ENCODE measurements at regions of chr6 and their contacts with region 1.

Region 1: GRCh38 chr6:144215932-144216667 is 65.8 kb downstream of the STX11 start:
- DNase-seq: peak; percentile 93
- H3K4me3 ChIP-seq: peak overlapping the region; percentile 79
- H3K27ac ChIP-seq: peak overlapping the region; percentile 93
- H3K4me1 ChIP-seq: peaks cover 31% of the 10 kb centered on the region
- H3K27me3 ChIP-seq: no peaks in the 10 kb centered on the region
- CTCF ChIP-seq: peak; percentile 67

Region 2: GRCh38 chr6:144284783-144285547 is 68.9 kb after region 1 on chr6 and contains the start of gene UTRN:
- intact Hi-C with region 1: loop called (anchors 5 kb)
- DNase-seq: peak; percentile 85
- H3K4me3 ChIP-seq: peak within 1 kb of the TSS; percentile 96
- H3K27ac ChIP-seq: peak within 1 kb of the TSS; percentile 98
- H3K4me1 ChIP-seq: peaks cover 48% of the 10 kb centered on the region
- H3K27me3 ChIP-seq: no peaks in the 10 kb centered on the region
- CTCF ChIP-seq: peak; percentile 12
- total RNA-seq, gene UTRN: 68.3 TPM

Region 3: DNA sequence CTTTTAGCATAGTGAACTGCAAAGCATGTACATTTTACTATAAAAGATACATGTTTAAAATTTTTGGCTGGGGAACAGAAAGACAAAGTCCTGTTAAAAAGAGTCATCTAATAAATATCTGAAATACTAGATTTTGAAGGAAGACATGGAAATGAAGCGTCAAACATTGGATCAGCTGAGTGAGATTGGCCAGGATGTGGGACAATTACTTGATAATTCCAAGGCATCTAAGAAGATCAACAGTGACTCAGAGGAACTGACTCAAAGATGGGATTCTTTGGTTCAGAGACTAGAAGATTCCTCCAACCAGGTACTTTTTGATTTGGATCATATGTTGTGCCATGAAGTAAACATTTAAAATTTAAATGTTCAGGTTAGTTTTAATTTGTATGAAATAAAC is 231.4 kb after region 1 on chr6:
- intact Hi-C with region 1: no loop called
- DNase-seq: no peak
- H3K4me3 ChIP-seq: no peak overlapping the region
- H3K27ac ChIP-seq: no peak overlapping the region
- H3K4me1 ChIP-seq: peaks cover 15% of the 10 kb centered on the region
- H3K27me3 ChIP-seq: no peaks in the 10 kb centered on the region
- CTCF ChIP-seq: no peak

Region 4: DNA sequence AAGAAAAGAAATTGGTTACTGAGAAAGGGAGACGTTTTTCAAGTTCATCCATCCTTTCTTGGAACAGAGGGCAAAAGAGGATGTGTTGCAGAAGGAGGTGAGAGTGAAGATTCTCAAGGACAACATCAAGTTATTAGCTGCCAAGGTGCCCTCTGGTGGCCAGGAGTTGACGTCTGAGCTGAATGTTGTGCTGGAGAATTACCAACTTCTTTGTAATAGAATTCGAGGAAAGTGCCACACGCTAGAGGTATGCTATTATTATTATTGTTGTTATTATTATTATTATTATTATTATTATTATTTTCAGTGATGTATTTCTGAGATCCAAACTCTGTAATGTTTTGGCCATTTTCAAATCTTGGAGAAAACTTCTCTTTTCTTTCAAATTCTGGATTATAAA is 266.0 kb after region 1 on chr6:
- intact Hi-C with region 1: loop called (anchors 10 kb)
- DNase-seq: peak; percentile 76
- H3K4me3 ChIP-seq: no peak overlapping the region
- H3K27ac ChIP-seq: peak overlapping the region; percentile 12
- H3K4me1 ChIP-seq: peaks cover 42% of the 10 kb centered on the region
- H3K27me3 ChIP-seq: no peaks in the 10 kb centered on the region
- CTCF ChIP-seq: peak; percentile 72

Region 5: GRCh38 chr6:144534180-144534579 is 318.1 kb after region 1 on chr6:
- intact Hi-C with region 1: no loop called
- DNase-seq: no peak
- H3K4me3 ChIP-seq: no peak overlapping the region
- H3K27ac ChIP-seq: no peak overlapping the region
- H3K4me1 ChIP-seq: no peaks in the 10 kb centered on the region
- H3K27me3 ChIP-seq: no peaks in the 10 kb centered on the region
- CTCF ChIP-seq: no peak

Measured in left ventricle myocardium inferior (tissue), 1 donor.